ENCODE measurements at regions of chr20 and their contacts with region 1.

Region 1: GRCh38 chr20:47379433-47380150 is 23.1 kb upstream of the ZMYND8 start:
- DNase-seq: no peak
- H3K4me3 ChIP-seq: no peak overlapping the region
- H3K4me3 Mint-ChIP-seq: no peak overlapping the region
- H3K27ac Mint-ChIP-seq: peak overlapping the region; percentile 2
- H3K4me1 ChIP-seq: peaks cover 15% of the 10 kb centered on the region
- H3K4me1 Mint-ChIP-seq: peaks cover 18% of the 10 kb centered on the region
- H3K27me3 ChIP-seq: no peaks in the 10 kb centered on the region
- H3K27me3 Mint-ChIP-seq: no peaks in the 10 kb centered on the region
- CTCF ChIP-seq: no peak

Region 2: DNA sequence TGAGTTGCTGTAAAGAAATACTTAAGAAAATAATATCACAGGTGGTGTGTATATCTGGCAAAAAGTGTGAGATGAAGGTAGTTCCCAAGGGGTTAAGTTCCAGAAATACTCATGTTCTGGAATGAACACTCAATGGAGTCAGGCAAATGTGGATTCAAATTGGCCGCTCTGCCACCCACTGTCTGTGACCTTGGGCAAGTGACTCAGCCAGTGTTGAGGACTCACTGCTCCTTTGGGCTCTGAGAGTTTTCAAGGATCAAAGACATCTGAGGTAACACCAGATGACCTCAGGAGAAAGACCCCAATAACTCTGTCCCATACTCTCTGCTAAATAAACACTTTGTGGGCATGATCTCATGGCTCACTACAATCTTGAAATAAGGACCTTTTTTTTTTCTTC is 544.2 kb before region 1 on chr20:
- CTCF ChIA-PET with region 1: no interaction called
- POLR2A ChIA-PET with region 1: no interaction called
- intact Hi-C with region 1: no loop called
- DNase-seq: no peak
- H3K4me3 ChIP-seq: no peak overlapping the region
- H3K4me3 Mint-ChIP-seq: no peak overlapping the region
- H3K27ac Mint-ChIP-seq: no peak overlapping the region
- H3K4me1 ChIP-seq: no peaks in the 10 kb centered on the region
- H3K4me1 Mint-ChIP-seq: peaks cover 7% of the 10 kb centered on the region
- H3K27me3 ChIP-seq: peaks cover 3% of the 10 kb centered on the region; the same call in 1 of the 2 replicates
- H3K27me3 Mint-ChIP-seq: peaks cover 19% of the 10 kb centered on the region
- CTCF ChIP-seq: no peak

Region 3: GRCh38 chr20:47196091-47197081 is 183.2 kb before region 1 on chr20:
- CTCF ChIA-PET with region 1: interaction called, 56 read pairs
- POLR2A ChIA-PET with region 1: interaction called, 3 read pairs
- intact Hi-C with region 1: loop called (anchors 1 kb)
- DNase-seq: peak; percentile 90 to 95
- H3K4me3 ChIP-seq: no peak overlapping the region
- H3K4me3 Mint-ChIP-seq: peak overlapping the region; percentile 1
- H3K27ac Mint-ChIP-seq: peak overlapping the region; percentile 44
- H3K4me1 ChIP-seq: peaks cover 25% of the 10 kb centered on the region
- H3K4me1 Mint-ChIP-seq: peaks cover 27% of the 10 kb centered on the region
- H3K27me3 ChIP-seq: no peaks in the 10 kb centered on the region
- H3K27me3 Mint-ChIP-seq: no peaks in the 10 kb centered on the region
- CTCF ChIP-seq: peak; percentile 100

Region 4: DNA sequence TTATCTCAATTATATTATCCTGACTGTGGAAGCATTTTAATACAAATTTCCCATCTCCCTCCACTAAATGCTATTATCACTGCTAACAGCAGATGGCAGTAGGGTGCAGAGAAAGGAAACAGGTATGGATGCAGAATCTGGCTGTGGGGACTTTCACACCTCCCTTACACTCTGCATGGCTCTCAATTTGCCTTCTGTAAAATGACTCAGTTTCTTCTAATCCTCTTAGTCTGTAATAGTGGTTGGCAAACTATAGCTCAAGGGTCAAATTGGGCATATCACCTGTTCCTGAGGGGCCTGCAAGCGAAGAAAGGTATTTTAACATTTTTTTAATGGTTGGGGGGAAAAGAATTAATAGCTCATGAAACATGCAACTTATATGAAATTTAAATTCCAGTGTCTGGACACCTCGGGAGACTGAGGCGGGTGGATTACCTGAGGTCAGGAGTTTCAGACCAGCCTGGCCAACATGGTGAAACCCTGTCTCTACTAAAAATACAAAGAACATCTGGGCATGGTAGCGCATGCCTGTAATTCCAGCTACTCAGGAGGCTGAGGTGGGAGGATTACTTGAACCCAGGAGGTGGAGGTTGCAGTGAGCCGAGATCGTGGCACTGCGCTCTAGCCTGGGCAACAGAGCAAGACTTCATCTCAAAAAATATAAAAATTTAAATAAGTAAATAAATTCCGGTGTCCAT is 106.5 kb before region 1 on chr20:
- CTCF ChIA-PET with region 1: interaction called, 261 read pairs
- POLR2A ChIA-PET with region 1: interaction called, 11 read pairs
- intact Hi-C with region 1: loop called (anchors 1 kb)
- DNase-seq: peak; percentile 72 to 89
- H3K4me3 ChIP-seq: no peak overlapping the region
- H3K4me3 Mint-ChIP-seq: no peak overlapping the region
- H3K27ac Mint-ChIP-seq: peak overlapping the region; percentile 11
- H3K4me1 ChIP-seq: peaks cover 7% of the 10 kb centered on the region
- H3K4me1 Mint-ChIP-seq: peaks cover 16% of the 10 kb centered on the region
- H3K27me3 ChIP-seq: no peaks in the 10 kb centered on the region
- H3K27me3 Mint-ChIP-seq: no peaks in the 10 kb centered on the region
- CTCF ChIP-seq: peak; percentile 98

Region 5: GRCh38 chr20:47317127-47317895 is 62.3 kb before region 1 on chr20:
- CTCF ChIA-PET with region 1: interaction called, 23 read pairs
- POLR2A ChIA-PET with region 1: interaction called, 6 read pairs
- intact Hi-C with region 1: loop called (anchors 2 kb)
- DNase-seq: no peak
- H3K4me3 ChIP-seq: no peak overlapping the region
- H3K4me3 Mint-ChIP-seq: peak overlapping the region; percentile 69
- H3K27ac Mint-ChIP-seq: peak overlapping the region; percentile 97
- H3K4me1 ChIP-seq: peaks cover 97% of the 10 kb centered on the region
- H3K4me1 Mint-ChIP-seq: peaks cover 69% of the 10 kb centered on the region
- H3K27me3 ChIP-seq: no peaks in the 10 kb centered on the region
- H3K27me3 Mint-ChIP-seq: no peaks in the 10 kb centered on the region
- CTCF ChIP-seq: no peak

Region 6: GRCh38 chr20:47348539-47349142 is 31.0 kb before region 1 on chr20:
- CTCF ChIA-PET with region 1: interaction called, 306 read pairs
- POLR2A ChIA-PET with region 1: no interaction called
- intact Hi-C with region 1: loop called (anchors 5 kb)
- DNase-seq: no peak
- H3K4me3 ChIP-seq: no peak overlapping the region
- H3K4me3 Mint-ChIP-seq: no peak overlapping the region
- H3K27ac Mint-ChIP-seq: no peak overlapping the region
- H3K4me1 ChIP-seq: peaks cover 53% of the 10 kb centered on the region
- H3K4me1 Mint-ChIP-seq: peaks cover 24% of the 10 kb centered on the region
- H3K27me3 ChIP-seq: no peaks in the 10 kb centered on the region
- H3K27me3 Mint-ChIP-seq: no peaks in the 10 kb centered on the region
- CTCF ChIP-seq: no peak

Region 7: DNA sequence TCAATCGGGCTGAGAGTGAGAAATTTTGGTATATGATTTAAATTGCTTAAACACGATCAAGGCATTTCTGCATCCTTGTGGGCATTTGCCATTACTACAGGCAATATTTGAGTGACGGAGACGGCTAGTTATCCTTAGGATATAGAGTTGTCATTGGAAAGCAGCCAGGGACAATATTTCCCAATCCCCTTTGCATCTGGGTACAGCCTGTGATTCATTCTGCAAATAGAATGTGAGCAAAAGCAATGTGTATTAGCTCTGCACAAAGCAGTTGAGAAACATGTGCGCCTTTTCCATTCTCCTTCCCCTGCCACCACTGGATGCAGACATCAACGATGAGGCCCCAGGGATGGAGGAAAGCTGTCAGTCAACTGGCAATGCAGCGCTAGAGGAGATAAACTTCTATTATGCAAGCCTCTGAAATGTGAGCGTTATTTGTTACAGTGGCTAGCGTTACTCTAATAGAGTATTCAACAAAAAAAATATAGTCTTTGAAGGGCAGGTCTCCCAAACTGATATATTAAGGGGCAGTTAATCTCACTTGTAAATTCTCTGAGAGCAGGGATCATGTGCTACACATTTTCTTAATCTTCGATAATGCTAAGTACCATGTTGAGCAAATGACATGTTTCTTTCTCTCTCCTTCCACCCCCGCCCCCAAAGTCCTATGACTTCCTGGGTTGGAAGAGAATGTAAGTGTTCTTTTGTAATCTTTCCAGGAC is 84.9 kb after region 1 on chr20:
- CTCF ChIA-PET with region 1: interaction called, 7 read pairs
- POLR2A ChIA-PET with region 1: no interaction called
- intact Hi-C with region 1: loop called (anchors 1 kb)
- DNase-seq: peak; percentile 87 to 91
- H3K4me3 ChIP-seq: no peak overlapping the region
- H3K4me3 Mint-ChIP-seq: no peak overlapping the region
- H3K27ac Mint-ChIP-seq: peak overlapping the region; percentile 64
- H3K4me1 ChIP-seq: peaks cover 37% of the 10 kb centered on the region
- H3K4me1 Mint-ChIP-seq: peaks cover 43% of the 10 kb centered on the region
- H3K27me3 ChIP-seq: no peaks in the 10 kb centered on the region
- H3K27me3 Mint-ChIP-seq: no peaks in the 10 kb centered on the region
- CTCF ChIP-seq: peak in 1 of 2 experiments; percentile 70

Region 8: GRCh38 chr20:47795214-47795919 is 415.8 kb after region 1 on chr20:
- CTCF ChIA-PET with region 1: no interaction called
- POLR2A ChIA-PET with region 1: no interaction called
- intact Hi-C with region 1: no loop called
- DNase-seq: no peak
- H3K4me3 ChIP-seq: no peak overlapping the region
- H3K4me3 Mint-ChIP-seq: no peak overlapping the region
- H3K27ac Mint-ChIP-seq: no peak overlapping the region
- H3K4me1 ChIP-seq: no peaks in the 10 kb centered on the region
- H3K4me1 Mint-ChIP-seq: peaks cover 6% of the 10 kb centered on the region
- H3K27me3 ChIP-seq: no peaks in the 10 kb centered on the region
- H3K27me3 Mint-ChIP-seq: no peaks in the 10 kb centered on the region
- CTCF ChIP-seq: no peak